ENCODE measurements at regions of chr6 and their contacts with region 1.

Region 1: GRCh38 chr6:165884813-165885765 is 222.0 kb upstream of the PDE10A start:
- DNase-seq: peak in 2 of 3 donors; percentile 82 to 88
- ATAC-seq: peak; percentile 93
- H3K4me3 ChIP-seq: no peak overlapping the region
- H3K4me1 ChIP-seq: no peaks in the 10 kb centered on the region
- CTCF ChIP-seq: peak; percentile 81

Region 2: DNA sequence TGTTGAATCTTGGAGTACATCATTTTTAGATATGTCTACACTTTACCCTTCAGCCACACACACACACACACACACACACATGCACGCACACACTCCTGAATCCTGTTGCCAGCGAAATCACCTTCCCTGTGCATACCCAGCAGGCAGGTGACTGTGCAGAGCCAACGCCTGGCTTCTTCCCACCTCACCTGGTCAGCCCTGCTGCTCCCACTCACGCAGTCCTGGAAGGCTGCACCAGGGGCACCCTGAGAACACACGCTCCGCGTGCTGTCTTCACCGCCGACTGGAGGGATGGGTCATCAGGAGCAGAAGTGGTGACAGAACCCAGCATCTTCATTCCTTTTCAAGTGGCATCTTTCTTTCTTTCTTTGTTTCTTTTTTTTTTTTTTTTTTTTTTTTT is 188.0 kb after region 1 on chr6:
- intact Hi-C with region 1: no loop called
- DNase-seq: no peak
- ATAC-seq: no peak
- H3K4me3 ChIP-seq: no peak overlapping the region
- H3K4me1 ChIP-seq: no peaks in the 10 kb centered on the region
- CTCF ChIP-seq: no peak

Region 3: GRCh38 chr6:166106076-166106686 is 221.1 kb after region 1 on chr6:
- intact Hi-C with region 1: loop called (anchors 2 to 5 kb)
- DNase-seq: peak in 2 of 3 donors; percentile 73 to 84
- ATAC-seq: peak; percentile 74
- H3K4me3 ChIP-seq: no peak overlapping the region
- H3K4me1 ChIP-seq: no peaks in the 10 kb centered on the region
- CTCF ChIP-seq: peak; percentile 76

Measured in mucosa of descending colon (tissue), 3 donors.